K562 (cell line): ENCODE measurements at regions of chr9 and their contacts with region 1.

Region 1: DNA sequence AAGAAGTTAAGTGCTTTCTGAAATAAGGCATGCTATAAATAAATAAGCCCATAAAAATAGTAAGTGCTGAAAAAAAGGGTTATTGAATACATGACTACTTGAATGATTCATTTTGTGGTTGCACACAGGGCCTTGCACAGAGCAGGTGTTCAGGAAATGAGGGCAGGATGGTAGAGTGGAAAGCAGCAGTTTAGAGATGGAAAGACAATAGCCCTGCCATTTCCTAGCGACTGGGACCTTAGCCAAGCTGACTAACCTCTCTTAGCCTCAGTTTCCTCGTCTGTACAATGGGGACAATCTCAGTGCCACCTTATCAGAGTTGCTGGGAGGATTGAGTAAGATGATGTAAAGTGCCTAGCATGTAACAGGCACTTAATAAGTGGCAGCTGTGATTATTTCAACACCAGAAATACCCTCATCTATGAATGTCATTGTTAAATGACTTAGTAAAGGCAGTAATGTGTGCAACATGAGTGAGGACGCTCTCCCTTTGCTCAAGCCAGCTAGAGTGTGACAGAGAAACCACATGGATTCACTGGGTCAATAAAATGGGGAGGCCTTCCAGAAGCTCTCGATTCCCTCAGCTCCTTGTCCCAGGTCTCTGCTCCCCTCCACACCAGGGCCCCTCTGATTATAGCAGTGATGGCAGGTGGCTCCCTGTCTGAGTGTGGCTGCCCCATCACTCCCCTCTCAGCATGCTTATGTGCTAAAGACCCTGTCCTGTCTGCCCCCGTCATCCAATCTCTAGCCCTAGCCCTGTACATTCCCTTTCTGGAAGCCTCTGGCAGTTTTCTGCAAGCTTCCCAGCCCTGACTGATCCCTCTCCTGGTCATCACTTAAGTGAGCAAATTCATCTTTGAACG is 16.0 kb upstream of the PHF19 start:
- DNase-seq: peak in 3 of 4 experiments; percentile 24 to 33 (median 31)
- ATAC-seq: no peak
- H3K4me3 ChIP-seq: no peak overlapping the region
- H3K27ac ChIP-seq: peak overlapping the region; percentile 10; the same call in 1 of the 3 replicates
- H3K4me1 ChIP-seq: peaks cover 41 to 57% of the 10 kb centered on the region in 2 experiments
- H3K27me3 ChIP-seq: no peaks in the 10 kb centered on the region
- CTCF ChIP-seq: no peak
- EP300 ChIP-seq: no peak
- POLR2A ChIP-seq: no peak
- RAD21 ChIP-seq: no peak

Region 2: DNA sequence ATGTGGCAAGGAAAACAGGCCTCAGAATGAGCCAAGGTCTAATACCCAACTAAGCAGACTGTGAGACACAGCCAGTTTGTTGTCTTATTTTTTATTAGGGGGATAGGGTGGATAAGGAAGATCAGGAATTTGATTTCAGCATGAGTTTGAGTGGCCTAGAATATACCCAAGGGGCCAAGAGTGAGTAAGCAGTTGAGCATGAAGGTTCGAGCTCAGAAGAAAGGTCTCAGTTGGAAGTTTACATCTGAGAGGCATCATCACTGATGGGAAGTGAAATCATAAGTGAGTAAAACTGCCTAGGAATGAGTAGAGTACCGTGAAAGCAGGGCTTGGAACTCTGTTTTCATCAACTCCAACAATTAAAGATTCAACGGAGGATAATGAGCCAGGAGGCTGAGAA is 62.8 kb before region 1 on chr9:
- CTCF ChIA-PET with region 1: no interaction called
- POLR2A ChIA-PET with region 1: interaction called, 5 read pairs
- in situ Hi-C with region 1: no loop called
- intact Hi-C with region 1: loop called (anchors 5 kb)
- DNase-seq: peak in 1 of 4 experiments; percentile 15
- ATAC-seq: no peak
- H3K4me3 ChIP-seq: no peak overlapping the region
- H3K27ac ChIP-seq: no peak overlapping the region
- H3K4me1 ChIP-seq: no peaks in the 10 kb centered on the region
- H3K27me3 ChIP-seq: no peaks in the 10 kb centered on the region
- CTCF ChIP-seq: no peak
- EP300 ChIP-seq: no peak
- POLR2A ChIP-seq: no peak
- RAD21 ChIP-seq: no peak

Region 3: DNA sequence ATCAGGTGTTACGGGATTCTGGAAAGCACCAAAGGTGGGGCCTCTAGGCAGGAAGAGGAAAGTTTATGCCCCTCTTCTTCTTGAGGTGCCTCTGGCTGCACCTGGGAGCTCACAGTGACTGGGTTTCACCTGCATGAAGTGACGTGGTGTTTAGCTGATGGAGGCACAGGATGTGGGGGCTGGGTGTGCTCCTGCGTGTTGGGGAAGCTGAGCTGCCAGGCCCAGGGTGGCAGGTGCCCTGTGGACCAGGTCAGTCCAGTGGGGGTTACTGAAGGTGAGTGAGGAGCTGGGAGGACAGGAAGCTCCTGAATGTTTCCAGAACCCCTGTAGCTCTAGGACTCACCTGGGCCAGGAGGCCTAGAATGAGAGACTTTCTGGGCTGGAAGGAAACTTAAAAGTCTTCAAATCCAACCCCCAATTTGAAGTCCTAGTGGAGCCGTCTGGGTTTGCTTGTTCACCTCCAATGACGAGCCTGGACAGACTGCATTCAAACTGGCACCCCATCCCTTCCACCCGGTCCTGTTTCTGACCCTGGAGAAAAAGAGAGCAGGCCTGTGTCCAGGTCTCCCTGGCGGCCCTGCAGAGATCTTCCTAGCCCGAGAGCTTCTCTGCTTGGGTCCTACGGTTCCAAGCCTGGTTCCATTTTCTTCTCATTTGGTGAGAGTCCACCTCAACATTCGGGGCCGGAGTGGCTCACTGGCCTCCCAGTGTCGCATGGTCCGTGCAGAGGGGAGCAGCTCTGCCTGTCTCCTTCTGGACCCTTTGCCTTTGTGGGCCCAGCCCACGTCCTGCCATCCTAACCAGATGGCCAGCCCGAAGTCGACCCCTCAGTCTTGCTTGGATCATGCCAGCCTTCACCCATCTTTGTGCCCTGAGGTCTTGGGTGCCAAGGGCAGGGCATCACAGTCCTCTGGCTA is 11.3 kb after region 1 on chr9:
- CTCF ChIA-PET with region 1: no interaction called
- POLR2A ChIA-PET with region 1: interaction called, 91 read pairs
- in situ Hi-C with region 1: no loop called
- intact Hi-C with region 1: no loop called
- DNase-seq: no peak
- ATAC-seq: no peak; the same call in 1 of the 3 replicates
- H3K4me3 ChIP-seq: no peak overlapping the region
- H3K27ac ChIP-seq: no peak overlapping the region
- H3K4me1 ChIP-seq: peaks cover 23 to 27% of the 10 kb centered on the region in 2 experiments; a peak in 4 of 5 replicates
- H3K27me3 ChIP-seq: no peaks in the 10 kb centered on the region
- CTCF ChIP-seq: no peak
- EP300 ChIP-seq: no peak
- POLR2A ChIP-seq: no peak
- RAD21 ChIP-seq: no peak

Region 4: GRCh38 chr9:120928483-120929228 is 35.7 kb after region 1 on chr9:
- CTCF ChIA-PET with region 1: no interaction called
- POLR2A ChIA-PET with region 1: no interaction called
- in situ Hi-C with region 1: no loop called
- intact Hi-C with region 1: no loop called
- DNase-seq: no peak
- ATAC-seq: no peak
- H3K4me3 ChIP-seq: no peak overlapping the region
- H3K27ac ChIP-seq: no peak overlapping the region
- H3K4me1 ChIP-seq: peaks cover 9 to 20% of the 10 kb centered on the region in 2 experiments
- H3K27me3 ChIP-seq: no peaks in the 10 kb centered on the region
- CTCF ChIP-seq: no peak
- EP300 ChIP-seq: no peak
- POLR2A ChIP-seq: no peak
- RAD21 ChIP-seq: no peak

Region 5: DNA sequence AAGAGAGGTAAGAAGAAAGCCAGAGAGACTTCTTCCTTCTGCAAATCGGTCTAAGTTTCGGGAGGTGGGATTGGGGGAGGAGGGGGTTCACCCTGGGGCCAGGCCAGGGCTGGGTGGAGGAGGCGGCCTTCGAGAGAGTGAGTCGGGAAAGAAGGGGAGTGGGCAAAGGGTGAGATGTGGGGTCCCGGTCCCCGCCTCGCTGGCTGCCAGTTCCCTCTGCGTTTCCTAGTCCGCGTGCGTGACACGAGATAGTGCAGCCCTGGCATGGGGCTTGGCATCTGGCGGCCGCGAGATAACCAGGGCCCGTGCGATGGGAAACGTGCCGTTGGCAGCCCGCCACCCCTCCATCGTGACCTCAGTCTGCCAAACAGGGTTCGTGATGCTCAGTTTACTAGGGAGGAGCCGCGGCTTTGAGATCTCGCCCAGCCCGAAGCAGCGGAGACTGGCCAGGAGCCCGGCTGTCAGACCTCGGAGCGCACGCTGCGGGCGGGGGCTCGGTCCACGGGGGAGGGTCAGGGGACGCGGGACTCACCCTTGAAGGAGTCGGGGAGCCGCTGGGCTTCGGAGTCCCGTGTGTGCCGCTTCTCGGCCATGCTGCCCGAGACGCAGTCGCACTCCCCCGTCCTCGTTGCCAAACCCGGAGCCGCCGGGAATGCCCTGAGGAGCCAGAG is 476.8 kb after region 1 on chr9 and contains the start of gene STOM:
- CTCF ChIA-PET with region 1: no interaction called
- POLR2A ChIA-PET with region 1: no interaction called
- in situ Hi-C with region 1: no loop called
- intact Hi-C with region 1: no loop called
- DNase-seq: peak in 1 of 4 experiments; percentile 10
- ATAC-seq: peak; percentile 73
- H3K4me3 ChIP-seq: peak within 1 kb of the TSS; percentile 77
- H3K27ac ChIP-seq: peak within 1 kb of the TSS; percentile 99
- H3K4me1 ChIP-seq: peaks cover 18 to 33% of the 10 kb centered on the region in 2 experiments
- H3K27me3 ChIP-seq: no peaks in the 10 kb centered on the region
- CTCF ChIP-seq: no peak
- EP300 ChIP-seq: no peak
- POLR2A ChIP-seq: peak; percentile 86; the same call in 1 of the 2 replicates
- RAD21 ChIP-seq: no peak
- polyA plus RNA-seq, gene STOM: 24.6 to 35.8 TPM